Tibial artery (tissue), 4 donors: ENCODE measurements at regions of chr1 and their contacts with region 1.

Region 1: GRCh38 chr1:67791686-67792475 is 41.4 kb downstream of the GNG12 start:
- DNase-seq: peak in 1 of 2 donors; percentile 58
- H3K4me3 ChIP-seq: no peak overlapping the region
- H3K27ac ChIP-seq: peak overlapping the region; percentile 69 to 76
- H3K4me1 ChIP-seq: peaks cover 0 to 92% (median 62%) of the 10 kb centered on the region in 4 donors
- H3K27me3 ChIP-seq: no peaks in the 10 kb centered on the region
- CTCF ChIP-seq: no peak

Region 2: GRCh38 chr1:67824766-67825165 is 32.9 kb after region 1 on chr1:
- intact Hi-C with region 1: loop called (anchors 5 kb)
- DNase-seq: no peak
- H3K4me3 ChIP-seq: no peak overlapping the region
- H3K27ac ChIP-seq: peak overlapping the region; percentile 23 to 27
- H3K4me1 ChIP-seq: peaks cover 0 to 78% (median 38%) of the 10 kb centered on the region in 4 donors
- H3K27me3 ChIP-seq: no peaks in the 10 kb centered on the region
- CTCF ChIP-seq: no peak

Region 3: DNA sequence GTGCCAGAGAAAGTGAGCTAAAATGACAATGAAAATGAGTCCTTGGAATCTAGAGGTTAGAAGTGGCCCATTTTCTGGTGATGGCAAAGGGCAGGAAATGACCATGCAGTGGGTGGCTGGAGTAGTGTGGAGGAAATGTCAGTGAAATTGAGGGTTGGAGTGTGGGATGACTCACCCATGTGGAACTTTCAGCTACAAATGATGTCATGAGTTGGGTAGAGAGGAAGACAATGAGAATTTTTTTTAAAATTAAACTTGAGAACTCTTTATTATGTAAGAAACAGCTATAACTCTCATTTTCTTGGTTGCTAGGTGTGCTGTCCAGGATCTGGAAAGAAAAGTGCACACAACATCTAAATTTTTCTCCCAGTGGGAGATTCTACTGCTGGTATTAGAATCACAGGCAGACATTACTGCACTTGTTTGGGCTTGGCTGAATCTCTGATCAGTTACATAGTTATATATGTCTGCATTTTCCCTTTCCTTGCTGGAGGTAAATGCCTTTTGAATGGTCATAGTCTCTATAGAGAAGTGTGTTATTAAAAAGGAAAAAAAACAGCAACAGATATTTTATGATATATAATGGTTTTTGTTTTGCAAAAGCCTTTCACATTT is 98.2 kb after region 1 on chr1:
- intact Hi-C with region 1: no loop called
- DNase-seq: no peak
- H3K4me3 ChIP-seq: no peak overlapping the region
- H3K27ac ChIP-seq: no peak overlapping the region
- H3K4me1 ChIP-seq: peaks cover 0 to 8% (median 0%) of the 10 kb centered on the region in 4 donors
- H3K27me3 ChIP-seq: no peaks in the 10 kb centered on the region
- CTCF ChIP-seq: no peak

Region 4: DNA sequence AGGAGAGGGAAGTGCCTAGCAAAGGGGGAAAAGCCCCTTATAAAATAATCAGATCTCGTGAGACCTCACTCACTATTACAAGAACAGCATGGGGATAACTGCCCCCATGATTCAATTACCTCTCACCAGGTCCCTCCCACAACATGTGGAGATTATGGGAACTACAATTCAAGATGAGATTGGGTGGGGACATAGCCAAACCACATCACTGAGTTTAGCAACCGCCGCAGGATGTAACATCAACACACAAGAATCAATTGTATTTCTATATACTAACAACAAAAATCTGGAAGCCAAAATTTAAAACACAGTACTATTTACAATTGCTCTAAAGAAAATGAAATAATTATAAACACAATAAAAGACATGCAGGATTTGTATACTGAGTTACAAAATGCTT is 236.7 kb after region 1 on chr1:
- intact Hi-C with region 1: no loop called
- DNase-seq: no peak
- H3K4me3 ChIP-seq: no peak overlapping the region
- H3K27ac ChIP-seq: no peak overlapping the region
- H3K4me1 ChIP-seq: no peaks in the 10 kb centered on the region
- H3K27me3 ChIP-seq: no peaks in the 10 kb centered on the region
- CTCF ChIP-seq: no peak